AG04449 (cell line): ENCODE measurements at regions of chr11 and their contacts with region 1.

Region 1: GRCh38 chr11:121655537-121656327 is 203.0 kb upstream of the SORL1-AS1 start:
- DNase-seq: peak; percentile 95
- H3K4me3 ChIP-seq: peak overlapping the region; percentile 55
- CTCF ChIP-seq: peak; percentile 98

Region 2: DNA sequence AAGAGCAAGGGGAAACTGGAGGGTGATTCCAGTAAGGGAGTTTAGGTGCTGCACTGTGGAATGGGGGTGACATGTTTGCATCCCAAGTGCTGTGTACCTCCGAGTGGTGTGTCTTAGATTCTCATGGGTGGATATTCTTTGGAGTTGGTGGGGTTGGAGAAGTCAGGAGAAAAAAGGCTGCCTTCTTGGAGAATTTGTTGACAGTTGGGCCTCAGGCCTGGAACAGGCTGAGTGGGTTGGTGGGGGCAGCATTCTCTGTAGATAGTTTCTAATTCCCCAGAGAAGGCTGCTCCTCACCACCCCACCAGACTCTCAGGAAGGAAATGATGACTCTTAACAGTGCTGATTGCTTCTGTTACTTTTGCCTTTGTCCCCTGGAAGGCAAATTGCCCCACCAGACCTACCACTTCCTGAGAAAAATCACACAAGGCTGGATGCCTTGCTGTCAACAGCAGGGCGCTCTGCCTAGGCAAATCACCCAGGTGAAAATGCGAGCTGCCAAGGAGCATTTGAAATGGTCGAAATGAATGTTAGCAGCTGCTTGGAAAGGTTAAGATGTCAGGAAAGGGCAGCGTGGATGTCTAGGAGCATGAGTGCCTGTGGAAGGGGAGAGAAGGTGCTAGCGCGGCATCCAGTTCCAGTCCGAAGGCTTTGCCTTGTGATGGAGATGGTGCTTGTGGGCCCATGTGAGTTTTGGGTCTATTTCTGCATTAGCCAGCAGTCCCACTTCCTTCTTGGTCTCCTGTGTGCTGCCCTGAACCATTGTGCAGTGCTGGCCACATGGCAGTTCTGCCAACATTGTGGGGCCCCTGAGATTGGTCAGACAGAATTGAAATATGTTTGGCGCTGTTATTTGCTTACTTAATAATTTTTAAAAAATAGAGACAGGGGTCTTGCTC is 173.3 kb before region 1 on chr11:
- CTCF ChIA-PET with region 1: no interaction called
- POLR2A ChIA-PET with region 1: no interaction called
- DNase-seq: no peak
- H3K4me3 ChIP-seq: no peak overlapping the region
- CTCF ChIP-seq: no peak

Region 3: DNA sequence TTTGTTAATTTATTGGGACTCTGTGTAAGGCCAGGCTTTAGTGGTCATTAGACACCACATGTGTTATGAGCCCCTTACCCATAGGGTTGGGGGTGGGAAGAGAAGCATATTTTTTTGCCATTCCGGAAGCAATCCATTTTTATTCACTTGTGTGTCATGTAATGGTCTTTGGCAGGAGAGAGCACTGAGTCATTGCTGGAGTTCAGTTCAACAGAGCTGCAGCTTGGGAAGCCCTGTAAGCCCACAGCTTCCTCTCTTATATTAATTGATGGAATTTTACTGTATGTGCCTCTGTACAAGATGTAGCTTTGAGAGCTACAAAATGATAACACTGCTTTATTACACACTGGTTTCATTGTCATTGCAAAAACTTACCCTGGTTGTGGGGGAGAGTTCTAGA is 25.7 kb before region 1 on chr11:
- CTCF ChIA-PET with region 1: interaction called, 14 read pairs
- POLR2A ChIA-PET with region 1: no interaction called
- DNase-seq: peak; percentile 75
- H3K4me3 ChIP-seq: no peak overlapping the region
- CTCF ChIP-seq: no peak

Region 4: GRCh38 chr11:121722431-121723245 is 66.9 kb after region 1 on chr11:
- CTCF ChIA-PET with region 1: no interaction called
- POLR2A ChIA-PET with region 1: no interaction called
- DNase-seq: no peak
- H3K4me3 ChIP-seq: peak overlapping the region; percentile 55
- CTCF ChIP-seq: no peak

Region 5: GRCh38 chr11:121929581-121929980 is 273.8 kb after region 1 on chr11:
- CTCF ChIA-PET with region 1: interaction called, 10 read pairs
- POLR2A ChIA-PET with region 1: no interaction called
- DNase-seq: no peak
- H3K4me3 ChIP-seq: peak overlapping the region; percentile 37
- CTCF ChIP-seq: no peak

Region 6: GRCh38 chr11:122045181-122045586 is 389.5 kb after region 1 on chr11:
- CTCF ChIA-PET with region 1: interaction called, 32 read pairs
- POLR2A ChIA-PET with region 1: interaction called, 3 read pairs
- DNase-seq: peak; percentile 85
- H3K4me3 ChIP-seq: no peak overlapping the region
- CTCF ChIP-seq: no peak

Region 7: DNA sequence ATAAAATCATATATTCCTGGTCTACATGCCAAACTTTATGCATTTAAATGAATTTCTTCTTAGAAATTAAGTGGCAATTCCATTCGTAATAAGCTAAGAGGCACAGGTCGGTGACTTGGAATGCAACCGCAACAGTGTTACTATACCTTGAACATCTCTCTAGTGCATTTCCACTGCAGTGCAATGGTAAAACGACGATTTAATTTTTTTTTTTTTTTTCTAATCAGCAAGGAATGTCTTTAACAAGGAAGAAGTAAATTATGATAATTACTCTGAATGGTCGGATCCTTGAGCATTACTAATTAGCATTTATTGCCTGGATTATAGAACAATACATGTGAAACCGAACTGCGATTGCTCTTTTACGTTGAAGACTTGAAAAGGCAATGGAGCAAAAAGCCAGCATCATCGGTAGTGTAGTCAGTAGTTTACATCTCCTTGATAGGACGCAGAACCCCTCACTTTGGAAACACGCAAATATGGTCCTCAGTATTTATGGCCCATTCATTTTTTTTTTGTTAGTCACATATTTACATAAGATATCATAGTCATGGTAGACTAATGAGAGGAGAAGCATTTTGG is 440.0 kb after region 1 on chr11:
- CTCF ChIA-PET with region 1: interaction called, 56 read pairs
- POLR2A ChIA-PET with region 1: interaction called, 5 read pairs
- DNase-seq: no peak
- H3K4me3 ChIP-seq: peak overlapping the region; percentile 82
- CTCF ChIP-seq: no peak

Region 8: DNA sequence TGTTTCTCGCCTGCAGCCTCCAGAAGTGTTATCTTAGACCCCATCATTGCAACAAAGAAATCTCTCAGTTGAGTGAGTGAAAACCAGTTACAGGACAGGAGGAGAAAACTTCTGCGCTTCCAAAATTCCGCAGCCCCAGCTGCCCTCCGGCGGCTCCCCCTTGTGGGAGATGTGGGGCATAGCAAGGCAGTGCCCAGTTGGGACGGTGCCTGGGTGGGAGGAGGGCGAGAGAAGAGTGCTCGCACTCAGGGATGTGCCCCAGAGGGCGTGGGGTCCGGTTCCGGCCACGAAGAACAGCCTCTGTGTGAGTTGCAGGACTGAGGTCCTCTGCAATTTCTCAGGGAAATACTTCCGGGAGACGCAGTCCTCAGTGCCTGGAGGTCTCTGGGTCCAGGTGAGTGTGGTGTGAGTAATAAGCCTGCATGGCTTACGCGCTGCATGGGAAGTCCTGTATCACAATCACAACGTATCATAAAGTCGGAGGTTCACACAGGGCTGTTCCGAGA is 547.3 kb after region 1 on chr11:
- CTCF ChIA-PET with region 1: interaction called, 33 read pairs
- POLR2A ChIA-PET with region 1: interaction called, 3 read pairs
- DNase-seq: no peak
- H3K4me3 ChIP-seq: peak overlapping the region; percentile 71
- CTCF ChIP-seq: peak; percentile 97